CD8-positive, alpha-beta T cell (primary cell): ENCODE measurements at regions of chr2 and their contacts with region 1.

Region 1: DNA sequence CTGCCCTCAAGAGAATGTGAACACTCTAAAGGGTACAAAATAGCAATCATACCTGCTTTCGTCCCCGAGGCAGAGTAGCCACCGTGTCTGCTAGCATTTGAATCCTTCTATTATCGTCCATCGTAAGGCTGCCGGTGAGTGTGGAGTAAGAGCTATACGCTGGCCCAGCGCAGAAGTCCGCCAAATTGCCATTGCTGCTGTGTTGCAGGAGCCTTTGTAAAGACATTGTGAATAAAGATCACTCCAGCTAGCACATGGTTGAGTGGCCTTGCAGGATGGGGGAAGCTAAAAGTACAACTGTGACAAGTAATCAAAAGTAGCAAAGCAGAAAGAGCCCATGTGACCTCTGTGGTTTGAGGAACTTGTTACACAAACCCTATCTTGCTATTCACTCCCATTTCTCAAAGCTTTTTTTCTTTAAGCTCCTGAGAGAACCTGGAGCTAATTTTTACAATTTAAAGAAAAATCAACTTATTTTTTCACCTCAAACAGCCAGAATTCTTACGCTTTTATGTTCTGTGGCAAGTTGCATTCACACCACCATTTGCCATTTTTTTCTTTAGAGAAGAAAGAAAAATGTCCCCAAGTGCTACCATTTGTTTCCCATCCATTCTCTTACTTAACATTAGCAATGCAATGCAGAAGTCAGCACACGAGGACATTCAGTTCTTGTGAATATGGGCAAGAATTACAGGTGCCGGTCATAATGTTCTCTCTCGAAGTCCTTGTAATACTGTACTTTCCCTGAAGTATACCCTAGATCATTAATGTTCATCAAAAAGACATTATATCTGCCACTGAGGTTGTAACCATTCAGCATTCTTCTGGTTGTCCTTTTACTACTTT is at the start of gene CYTIP:
- DNase-seq: peak in 7 of 9 experiments; percentile 52 to 88 (median 64)
- ATAC-seq: peak; percentile 35
- H3K4me3 ChIP-seq: peak within 1 kb of the TSS; percentile 80 to 83
- H3K4me3 Mint-ChIP-seq: peak within 1 kb of the TSS; percentile 91
- H3K27ac ChIP-seq: peak within 1 kb of the TSS; percentile 88 to 92
- H3K27ac Mint-ChIP-seq: peak within 1 kb of the TSS; percentile 98
- H3K4me1 ChIP-seq: peaks cover 35% of the 10 kb centered on the region
- H3K4me1 Mint-ChIP-seq: peaks cover 46% of the 10 kb centered on the region
- H3K27me3 ChIP-seq: no peaks in the 10 kb centered on the region
- H3K27me3 Mint-ChIP-seq: no peaks in the 10 kb centered on the region
- CTCF ChIP-seq: no peak
- total RNA-seq, gene CYTIP: 425 to 430 TPM

Region 2: DNA sequence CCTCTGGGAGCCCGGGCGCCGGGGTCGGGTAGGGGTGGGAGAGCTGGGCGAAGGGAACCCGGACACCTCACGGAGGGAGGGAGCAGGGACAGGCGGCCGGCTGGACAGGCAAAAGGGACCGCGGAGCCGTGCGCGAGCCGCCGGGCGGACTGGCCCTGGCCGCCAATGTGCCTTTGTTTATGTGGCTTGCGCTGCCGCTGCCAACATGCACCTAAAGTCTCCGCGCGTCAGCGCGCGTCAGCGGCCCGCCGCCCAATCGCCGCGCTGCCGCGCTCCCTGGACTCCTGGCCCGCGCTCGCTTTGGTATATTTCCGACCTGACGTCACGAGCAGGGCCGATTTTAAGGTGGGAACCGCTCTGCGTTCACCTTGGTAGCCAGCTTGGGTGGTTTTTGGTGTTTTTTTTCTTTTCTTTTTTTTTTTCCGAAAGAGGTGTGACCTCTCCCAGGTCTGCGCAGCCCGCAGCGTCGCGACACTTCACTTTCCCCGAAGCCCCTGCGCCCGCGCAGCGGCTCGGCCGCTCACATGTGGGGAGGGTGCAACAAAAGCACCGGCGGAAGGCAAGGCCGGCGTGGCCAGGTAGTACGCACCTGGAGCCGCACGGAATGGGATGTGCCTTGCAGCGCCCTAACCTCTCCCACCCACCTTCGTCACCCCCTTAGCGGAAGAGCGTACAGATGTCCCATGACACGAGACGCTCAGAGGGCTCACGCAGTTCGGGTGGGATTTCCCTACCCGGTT is 1111.3 kb before region 1 on chr2 and contains the start of gene NR4A2:
- CTCF ChIA-PET with region 1: no interaction called
- POLR2A ChIA-PET with region 1: no interaction called
- intact Hi-C with region 1: loop called (anchors 10 kb)
- DNase-seq: peak; percentile 82 to 98 (median 89)
- ATAC-seq: peak; percentile 60
- H3K4me3 ChIP-seq: peak within 1 kb of the TSS; percentile 83 to 88
- H3K4me3 Mint-ChIP-seq: peak within 1 kb of the TSS; percentile 90
- H3K27ac ChIP-seq: peak within 1 kb of the TSS; percentile 91 to 99
- H3K27ac Mint-ChIP-seq: peak within 1 kb of the TSS; percentile 98
- H3K4me1 ChIP-seq: peaks cover 33% of the 10 kb centered on the region
- H3K4me1 Mint-ChIP-seq: peaks cover 44% of the 10 kb centered on the region
- H3K27me3 ChIP-seq: peaks cover 0 to 6% of the 10 kb centered on the region in 2 experiments
- H3K27me3 Mint-ChIP-seq: peaks cover 23% of the 10 kb centered on the region
- CTCF ChIP-seq: no peak
- total RNA-seq, gene NR4A2: 777 to 796 TPM

Region 3: GRCh38 chr2:157413326-157414035 is 30.5 kb before region 1 on chr2:
- CTCF ChIA-PET with region 1: interaction called, 25 read pairs
- POLR2A ChIA-PET with region 1: interaction called, 97 read pairs
- intact Hi-C with region 1: loop called (anchors 1 kb)
- DNase-seq: peak in 7 of 9 experiments; percentile 41 to 91 (median 64)
- ATAC-seq: peak; percentile 76
- H3K4me3 ChIP-seq: peak overlapping the region in 1 of 2 experiments; percentile 2
- H3K4me3 Mint-ChIP-seq: peak overlapping the region; percentile 44
- H3K27ac ChIP-seq: peak overlapping the region; percentile 49 to 80
- H3K27ac Mint-ChIP-seq: peak overlapping the region; percentile 91
- H3K4me1 ChIP-seq: peaks cover 95% of the 10 kb centered on the region
- H3K4me1 Mint-ChIP-seq: peaks cover 89% of the 10 kb centered on the region
- H3K27me3 ChIP-seq: no peaks in the 10 kb centered on the region
- H3K27me3 Mint-ChIP-seq: no peaks in the 10 kb centered on the region
- CTCF ChIP-seq: no peak

Region 4: GRCh38 chr2:157433394-157433793 is 10.6 kb before region 1 on chr2:
- CTCF ChIA-PET with region 1: interaction called, 13 read pairs
- POLR2A ChIA-PET with region 1: interaction called, 79 read pairs
- intact Hi-C with region 1: loop called in 1 of 2 experiments (anchors 1 kb)
- DNase-seq: no peak
- ATAC-seq: peak; percentile 10
- H3K4me3 ChIP-seq: peak overlapping the region; percentile 57 to 83
- H3K4me3 Mint-ChIP-seq: peak overlapping the region; percentile 80
- H3K27ac ChIP-seq: peak overlapping the region; percentile 44 to 92
- H3K27ac Mint-ChIP-seq: peak overlapping the region; percentile 91
- H3K4me1 ChIP-seq: peaks cover 65% of the 10 kb centered on the region
- H3K4me1 Mint-ChIP-seq: peaks cover 85% of the 10 kb centered on the region
- H3K27me3 ChIP-seq: no peaks in the 10 kb centered on the region
- H3K27me3 Mint-ChIP-seq: no peaks in the 10 kb centered on the region
- CTCF ChIP-seq: no peak

Region 5: GRCh38 chr2:157468931-157469708 is 25.1 kb after region 1 on chr2:
- CTCF ChIA-PET with region 1: interaction called, 3 read pairs
- POLR2A ChIA-PET with region 1: interaction called, 9 read pairs
- intact Hi-C with region 1: loop called (anchors 1 kb)
- DNase-seq: peak in 2 of 9 experiments; percentile 70 to 85
- ATAC-seq: peak; percentile 87
- H3K4me3 ChIP-seq: peak overlapping the region in 1 of 2 experiments; percentile 2
- H3K4me3 Mint-ChIP-seq: peak overlapping the region; percentile 57
- H3K27ac ChIP-seq: peak overlapping the region; percentile 67 to 73
- H3K27ac Mint-ChIP-seq: peak overlapping the region; percentile 96
- H3K4me1 ChIP-seq: peaks cover 43% of the 10 kb centered on the region
- H3K4me1 Mint-ChIP-seq: peaks cover 67% of the 10 kb centered on the region
- H3K27me3 ChIP-seq: no peaks in the 10 kb centered on the region
- H3K27me3 Mint-ChIP-seq: no peaks in the 10 kb centered on the region
- CTCF ChIP-seq: no peak

Region 6: DNA sequence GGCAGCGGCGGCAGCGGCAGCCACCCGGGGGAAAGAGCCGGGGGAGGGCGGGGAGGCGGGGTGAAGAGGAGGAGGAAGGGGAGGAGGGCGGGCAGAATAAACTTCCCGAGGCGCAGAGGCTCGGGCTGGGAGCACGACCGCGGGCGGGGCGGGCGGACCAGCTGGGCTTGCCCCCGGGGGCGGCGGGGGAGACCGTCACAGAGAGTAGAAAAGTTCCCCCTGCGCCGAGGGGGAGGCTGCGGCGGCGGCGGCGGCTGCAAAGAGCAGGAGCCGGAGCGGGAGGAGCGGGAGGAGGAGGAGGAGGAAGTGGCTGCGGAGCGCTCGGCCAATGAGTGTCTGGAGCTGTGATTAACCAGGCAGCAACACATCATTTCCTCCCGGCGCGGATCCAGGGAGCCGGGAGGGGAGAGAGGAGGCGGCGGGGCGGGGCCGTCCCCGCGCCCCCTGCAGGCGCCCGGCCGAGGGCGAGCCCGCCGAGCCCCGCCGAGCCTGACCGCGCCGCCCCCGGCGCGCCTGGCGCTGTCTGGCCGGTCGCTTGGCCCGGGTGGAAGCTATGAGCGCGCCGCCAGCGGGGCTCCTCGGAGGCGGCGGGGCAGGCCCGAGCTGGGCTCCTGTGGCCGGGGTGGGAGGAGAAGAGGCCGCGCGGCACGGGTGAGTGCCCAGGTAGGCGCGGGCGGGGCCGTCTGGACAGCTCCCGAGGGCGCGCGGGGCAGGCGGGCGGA is 432.2 kb after region 1 on chr2 and contains the start of gene ACVR1:
- CTCF ChIA-PET with region 1: no interaction called
- POLR2A ChIA-PET with region 1: no interaction called
- intact Hi-C with region 1: loop called in 1 of 2 experiments (anchors 10 kb)
- DNase-seq: peak; percentile 37 to 92 (median 78)
- ATAC-seq: peak; percentile 72
- H3K4me3 ChIP-seq: peak within 1 kb of the TSS; percentile 53 to 74
- H3K4me3 Mint-ChIP-seq: peak within 1 kb of the TSS; percentile 94
- H3K27ac ChIP-seq: peak within 1 kb of the TSS; percentile 1 to 29
- H3K27ac Mint-ChIP-seq: peak within 1 kb of the TSS; percentile 90
- H3K4me1 ChIP-seq: peaks cover 10% of the 10 kb centered on the region
- H3K4me1 Mint-ChIP-seq: peaks cover 48% of the 10 kb centered on the region
- H3K27me3 ChIP-seq: no peaks in the 10 kb centered on the region
- H3K27me3 Mint-ChIP-seq: no peaks in the 10 kb centered on the region
- CTCF ChIP-seq: peak; percentile 27
- total RNA-seq, gene ACVR1: 7.0 to 8.3 TPM

Region 7: GRCh38 chr2:158845859-158846258 is 1401.8 kb after region 1 on chr2:
- CTCF ChIA-PET with region 1: no interaction called
- POLR2A ChIA-PET with region 1: no interaction called
- intact Hi-C with region 1: no loop called
- DNase-seq: no peak
- ATAC-seq: no peak
- H3K4me3 ChIP-seq: no peak overlapping the region
- H3K4me3 Mint-ChIP-seq: no peak overlapping the region
- H3K27ac ChIP-seq: no peak overlapping the region
- H3K27ac Mint-ChIP-seq: no peak overlapping the region
- H3K4me1 ChIP-seq: no peaks in the 10 kb centered on the region
- H3K4me1 Mint-ChIP-seq: no peaks in the 10 kb centered on the region
- H3K27me3 ChIP-seq: no peaks in the 10 kb centered on the region
- H3K27me3 Mint-ChIP-seq: peaks cover 2% of the 10 kb centered on the region
- CTCF ChIP-seq: no peak